ENCODE measurements at regions of chr6 and their contacts with region 1.

Region 1: DNA sequence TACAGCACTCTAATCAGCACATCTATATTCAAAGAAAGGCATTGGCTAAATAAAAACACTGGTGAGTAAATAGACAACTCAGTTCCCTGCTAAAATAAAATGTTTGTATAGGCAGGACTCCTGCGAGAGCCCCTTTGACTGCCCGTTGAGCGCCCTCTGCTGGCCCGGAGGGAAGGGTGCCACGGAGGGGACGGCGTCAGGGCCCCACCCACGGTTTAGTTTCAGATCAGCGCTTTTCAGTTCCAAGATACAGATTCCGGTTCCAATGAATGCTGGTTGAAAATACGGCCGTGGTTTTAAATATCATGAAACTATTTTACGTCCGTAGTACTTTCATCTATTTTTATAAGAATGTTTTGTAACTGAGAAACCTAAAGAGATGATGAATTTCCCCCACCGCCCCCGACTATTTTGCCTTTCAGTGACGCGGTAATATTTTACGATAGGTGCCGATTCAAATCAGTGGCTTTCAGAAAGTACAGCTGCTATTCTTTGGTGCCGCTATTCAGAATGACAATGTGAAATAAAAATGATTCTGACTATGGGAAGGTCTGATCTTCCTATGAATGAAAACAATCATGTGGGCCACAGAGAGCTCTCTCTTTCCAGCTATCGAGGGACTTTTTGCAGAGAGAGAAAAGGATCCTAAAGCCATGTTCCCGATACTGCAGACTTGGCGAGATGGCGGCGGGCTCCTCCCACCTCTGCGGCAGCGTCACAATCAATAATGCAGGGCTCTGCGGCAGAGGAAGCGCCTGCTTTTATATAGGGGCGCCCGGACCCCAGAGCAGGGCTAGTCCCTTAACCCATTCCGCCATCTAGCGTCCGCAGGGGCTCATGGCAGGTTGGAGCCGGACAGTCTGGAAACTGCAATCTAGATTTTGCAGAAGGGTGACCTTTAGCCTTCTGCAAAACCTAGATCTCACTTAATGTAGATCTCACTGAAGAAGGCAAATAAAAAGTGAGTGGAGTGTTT is 10.6 kb upstream of the CCN6 start:
- DNase-seq: peak; percentile 83 to 93 (median 89)
- ATAC-seq: peak; percentile 89 to 95 (median 94)
- H3K4me3 ChIP-seq: peak overlapping the region; percentile 12 to 77 (median 60)
- H3K27ac ChIP-seq: peak overlapping the region; percentile 21 to 87 (median 70)
- H3K4me1 ChIP-seq: peaks cover 0 to 20% (median 3%) of the 10 kb centered on the region in 12 donors
- H3K27me3 ChIP-seq: no peaks in the 10 kb centered on the region
- CTCF ChIP-seq: peak; percentile 91 to 99 (median 94)
- POLR2A ChIP-seq: no peak

Region 2: GRCh38 chr6:110999634-111000270 is 1043.6 kb before region 1 on chr6:
- intact Hi-C with region 1: loop called in 1 of 10 experiments (anchors 10 kb)
- DNase-seq: no peak
- ATAC-seq: no peak
- H3K4me3 ChIP-seq: no peak overlapping the region
- H3K27ac ChIP-seq: no peak overlapping the region
- H3K4me1 ChIP-seq: no peaks in the 10 kb centered on the region
- H3K27me3 ChIP-seq: no peaks in the 10 kb centered on the region
- CTCF ChIP-seq: peak in 11 of 12 donors; percentile 15 to 58 (median 45)
- POLR2A ChIP-seq: no peak

Region 3: DNA sequence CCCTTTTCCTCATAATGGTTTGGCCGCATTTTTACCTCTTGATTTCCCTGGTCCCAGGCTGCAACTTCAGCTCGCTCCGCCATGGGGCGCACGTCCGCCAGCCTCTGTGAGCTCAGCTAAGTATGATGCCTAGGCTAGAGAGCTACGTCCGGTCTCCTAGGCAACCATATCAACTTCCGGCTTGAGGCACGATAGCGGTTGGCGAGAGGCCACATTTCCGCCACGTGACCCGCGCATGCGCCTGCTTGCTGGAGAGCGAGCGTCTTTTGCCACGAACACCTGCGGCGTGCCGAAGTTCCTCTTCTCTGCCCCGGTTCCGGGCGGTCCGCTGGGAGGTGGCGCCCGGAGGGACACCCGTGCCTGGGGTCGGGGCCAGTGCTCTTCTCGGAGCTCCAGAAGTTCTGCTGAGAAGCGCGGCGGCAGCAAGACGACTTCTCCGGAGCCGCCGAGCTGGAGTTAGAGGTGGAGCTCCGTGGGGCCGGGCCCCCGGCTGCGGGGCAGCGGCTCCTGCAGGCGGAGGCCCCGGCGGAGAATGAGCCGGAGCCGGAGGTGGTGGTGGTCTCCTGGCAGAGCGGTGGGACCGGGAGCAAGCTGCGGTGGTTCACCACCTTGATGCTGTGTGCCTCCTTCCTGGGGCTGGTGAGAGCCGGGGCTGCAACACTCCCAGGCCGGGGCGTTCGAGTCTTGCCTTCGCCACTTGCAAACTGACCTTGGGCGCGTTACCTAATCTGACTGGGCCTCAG is 784.1 kb before region 1 on chr6:
- intact Hi-C with region 1: loop called in 7 of 10 experiments (anchors 1 to 10 kb)
- DNase-seq: peak; percentile 98 to 99 (median 99)
- ATAC-seq: peak; percentile 98 to 99 (median 99)
- H3K4me3 ChIP-seq: peak overlapping the region; percentile 50 to 94 (median 68)
- H3K27ac ChIP-seq: peak overlapping the region; percentile 33 to 94 (median 82)
- H3K4me1 ChIP-seq: peaks cover 0 to 22% (median 13%) of the 10 kb centered on the region in 12 donors
- H3K27me3 ChIP-seq: peaks cover 0 to 9% (median 0%) of the 10 kb centered on the region in 9 donors
- CTCF ChIP-seq: peak; percentile 90 to 99 (median 95)
- POLR2A ChIP-seq: peak in 1 of 2 donors; percentile 61

Region 4: GRCh38 chr6:111894272-111894671 is 149.0 kb before region 1 on chr6:
- intact Hi-C with region 1: loop called in 1 of 10 experiments (anchors 5 kb)
- DNase-seq: no peak
- ATAC-seq: no peak
- H3K4me3 ChIP-seq: no peak overlapping the region
- H3K27ac ChIP-seq: no peak overlapping the region
- H3K4me1 ChIP-seq: peaks cover 0 to 5% (median 0%) of the 10 kb centered on the region in 12 donors
- H3K27me3 ChIP-seq: no peaks in the 10 kb centered on the region
- CTCF ChIP-seq: no peak
- POLR2A ChIP-seq: no peak

Region 5: DNA sequence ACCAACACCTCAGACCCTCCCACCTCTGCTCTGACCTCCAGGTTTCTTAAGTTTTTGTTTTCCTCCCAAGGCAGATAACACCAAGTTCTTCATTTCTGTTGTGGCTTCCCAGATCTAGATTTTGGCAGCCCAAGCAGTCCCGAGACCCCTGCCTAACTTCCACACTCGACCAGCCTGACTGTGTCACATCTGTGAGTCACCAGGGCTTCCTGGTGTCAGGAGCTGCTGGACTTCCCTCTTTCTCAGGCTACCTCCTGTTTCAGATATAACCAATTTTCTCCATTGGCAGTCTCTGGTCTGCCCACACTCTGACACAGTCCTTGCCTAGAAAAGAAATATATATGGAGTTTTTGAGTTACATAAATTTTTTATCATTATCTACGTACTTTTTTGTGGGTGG is 35.5 kb before region 1 on chr6:
- intact Hi-C with region 1: loop called in 1 of 10 experiments (anchors 5 kb)
- DNase-seq: peak in 2 of 5 donors; percentile 30 to 44
- ATAC-seq: peak in 2 of 4 donors; percentile 48 to 59
- H3K4me3 ChIP-seq: no peak overlapping the region
- H3K27ac ChIP-seq: peak overlapping the region in 4 of 12 donors; percentile 6 to 47 (median 16)
- H3K4me1 ChIP-seq: peaks cover 0 to 32% (median 6%) of the 10 kb centered on the region in 12 donors
- H3K27me3 ChIP-seq: no peaks in the 10 kb centered on the region
- CTCF ChIP-seq: no peak
- POLR2A ChIP-seq: no peak

Region 6: DNA sequence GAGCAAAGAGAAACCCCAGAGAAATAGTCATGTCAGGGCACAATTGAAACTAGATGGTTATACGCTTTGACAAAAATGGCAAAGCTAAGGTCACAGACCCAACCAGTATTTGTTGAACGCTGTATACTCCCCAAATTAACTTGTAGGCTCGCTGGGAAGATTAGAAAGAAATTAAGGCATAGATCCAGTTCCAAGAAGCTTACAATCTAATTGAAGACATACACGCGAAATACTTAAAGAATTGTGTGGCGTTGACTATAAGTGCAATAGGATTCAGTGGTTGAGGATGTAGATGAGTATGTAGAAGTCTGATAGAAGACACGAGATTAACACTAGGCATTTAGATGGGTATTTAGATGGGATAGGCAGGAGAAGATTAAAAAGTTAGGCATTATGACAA is 44.6 kb after region 1 on chr6:
- intact Hi-C with region 1: no loop called
- DNase-seq: no peak
- ATAC-seq: no peak
- H3K4me3 ChIP-seq: peak overlapping the region; percentile 62 to 88 (median 80)
- H3K27ac ChIP-seq: peak overlapping the region; percentile 73 to 92 (median 86)
- H3K4me1 ChIP-seq: peaks cover 0 to 35% (median 17%) of the 10 kb centered on the region in 12 donors
- H3K27me3 ChIP-seq: no peaks in the 10 kb centered on the region
- CTCF ChIP-seq: no peak
- POLR2A ChIP-seq: no peak

Region 7: DNA sequence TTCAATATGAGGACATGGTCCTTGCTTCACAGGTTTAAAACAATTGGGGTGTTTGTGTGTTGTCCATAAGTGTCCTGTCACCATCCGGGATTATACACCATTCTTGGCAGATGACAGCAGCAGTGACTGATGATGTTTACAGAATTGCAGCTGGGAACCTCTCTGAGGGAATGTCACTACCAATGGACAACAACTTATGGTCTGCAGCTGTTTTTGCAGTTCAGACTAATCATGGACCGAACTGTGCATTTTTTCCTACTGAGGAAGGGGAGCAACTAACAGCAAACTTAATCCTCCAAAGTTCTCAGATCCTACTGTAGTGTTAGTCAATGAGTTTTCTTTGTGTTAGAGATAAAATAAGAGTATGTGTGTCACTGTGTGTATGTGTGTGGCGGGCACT is 70.1 kb after region 1 on chr6:
- intact Hi-C with region 1: no loop called
- DNase-seq: no peak
- ATAC-seq: peak in 1 of 4 donors; percentile 62
- H3K4me3 ChIP-seq: no peak overlapping the region
- H3K27ac ChIP-seq: peak overlapping the region in 5 of 12 donors; percentile 3 to 15 (median 14)
- H3K4me1 ChIP-seq: peaks cover 0 to 31% (median 5%) of the 10 kb centered on the region in 12 donors
- H3K27me3 ChIP-seq: no peaks in the 10 kb centered on the region
- CTCF ChIP-seq: no peak
- POLR2A ChIP-seq: no peak

Region 8: GRCh38 chr6:112253841-112254816 is 210.8 kb after region 1 on chr6 and contains the start of gene LAMA4:
- intact Hi-C with region 1: no loop called
- DNase-seq: peak; percentile 65 to 82 (median 71)
- ATAC-seq: peak; percentile 60 to 78 (median 74)
- H3K4me3 ChIP-seq: peak within 1 kb of the TSS; percentile 53 to 97 (median 73)
- H3K27ac ChIP-seq: peak within 1 kb of the TSS; percentile 86 to 98 (median 95)
- H3K4me1 ChIP-seq: peaks cover 6 to 54% (median 31%) of the 10 kb centered on the region in 12 donors
- H3K27me3 ChIP-seq: peaks cover 0 to 7% (median 0%) of the 10 kb centered on the region in 9 donors
- CTCF ChIP-seq: peak in 1 of 12 donors; percentile 4
- POLR2A ChIP-seq: peak in 1 of 2 donors; percentile 73
- total RNA-seq, gene LAMA4: 42.6 to 132 (median 77.7) TPM

Region 9: GRCh38 chr6:112680091-112680490 is 636.8 kb after region 1 on chr6:
- intact Hi-C with region 1: no loop called
- DNase-seq: no peak
- ATAC-seq: no peak
- H3K4me3 ChIP-seq: no peak overlapping the region
- H3K27ac ChIP-seq: no peak overlapping the region
- H3K4me1 ChIP-seq: no peaks in the 10 kb centered on the region
- H3K27me3 ChIP-seq: no peaks in the 10 kb centered on the region
- CTCF ChIP-seq: no peak
- POLR2A ChIP-seq: no peak